ENCODE measurements at regions of chr4 and their contacts with region 1.

Region 1: DNA sequence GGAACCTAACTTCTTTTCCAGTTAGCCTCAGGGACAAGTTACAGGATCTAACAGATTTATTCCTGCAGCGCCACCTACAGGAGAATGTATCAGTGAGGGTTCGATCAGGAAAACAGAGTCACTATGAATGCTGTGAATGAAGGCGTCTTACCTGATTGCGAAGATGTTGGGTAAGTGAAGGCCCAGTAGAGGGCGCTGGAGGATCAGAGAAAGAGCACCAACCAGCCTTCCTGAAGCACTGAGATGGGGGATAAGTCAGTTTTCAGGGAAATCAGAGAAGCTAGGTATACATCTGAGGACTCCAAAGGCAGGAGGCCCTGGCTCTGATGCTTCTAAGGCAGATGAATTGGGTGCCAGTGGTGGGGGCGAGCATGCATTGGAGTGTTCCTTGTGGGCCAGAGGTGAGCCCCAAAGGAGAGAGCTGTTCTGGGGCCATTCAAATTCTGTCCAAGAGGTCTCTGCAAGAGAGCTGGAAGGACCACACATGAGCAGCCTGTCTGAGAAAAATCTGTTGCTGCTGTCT is 169.9 kb upstream of the AADAT start:
- DNase-seq: peak; percentile 82 to 86
- H3K4me3 ChIP-seq: no peak overlapping the region
- H3K4me3 Mint-ChIP-seq: no peak overlapping the region
- H3K27ac Mint-ChIP-seq: no peak overlapping the region
- H3K4me1 ChIP-seq: no peaks in the 10 kb centered on the region
- H3K4me1 Mint-ChIP-seq: no peaks in the 10 kb centered on the region
- H3K27me3 ChIP-seq: no peaks in the 10 kb centered on the region
- H3K27me3 Mint-ChIP-seq: no peaks in the 10 kb centered on the region
- CTCF ChIP-seq: peak; percentile 79 to 86

Region 2: DNA sequence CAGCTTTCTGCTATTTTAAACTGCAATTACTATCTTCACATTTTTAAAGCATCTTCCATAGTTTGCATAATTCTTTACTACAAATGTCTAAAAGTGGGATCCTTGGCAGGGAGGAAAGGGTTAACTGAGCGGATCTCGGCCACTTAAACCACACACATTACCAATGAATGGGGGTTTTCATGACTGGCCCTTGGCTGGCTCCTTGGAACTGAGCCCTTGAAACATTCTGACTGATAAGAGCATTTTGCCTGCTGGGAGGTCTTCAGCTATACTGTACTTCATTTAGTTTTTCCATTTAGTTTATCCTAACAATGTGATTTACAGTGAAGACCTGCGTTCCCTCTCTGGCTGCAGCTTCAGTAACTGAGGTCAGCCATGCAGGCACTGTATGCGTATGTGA is 201.8 kb before region 1 on chr4:
- CTCF ChIA-PET with region 1: no interaction called
- POLR2A ChIA-PET with region 1: no interaction called
- intact Hi-C with region 1: no loop called
- DNase-seq: no peak
- H3K4me3 ChIP-seq: no peak overlapping the region
- H3K4me3 Mint-ChIP-seq: no peak overlapping the region
- H3K27ac Mint-ChIP-seq: no peak overlapping the region
- H3K4me1 ChIP-seq: no peaks in the 10 kb centered on the region
- H3K4me1 Mint-ChIP-seq: no peaks in the 10 kb centered on the region
- H3K27me3 ChIP-seq: no peaks in the 10 kb centered on the region
- H3K27me3 Mint-ChIP-seq: no peaks in the 10 kb centered on the region
- CTCF ChIP-seq: no peak

Region 3: GRCh38 chr4:170138580-170139194 is 121.0 kb before region 1 on chr4:
- CTCF ChIA-PET with region 1: interaction called, 3 read pairs
- POLR2A ChIA-PET with region 1: no interaction called
- intact Hi-C with region 1: loop called (anchors 1 kb)
- DNase-seq: peak; percentile 69 to 74
- H3K4me3 ChIP-seq: no peak overlapping the region
- H3K4me3 Mint-ChIP-seq: no peak overlapping the region
- H3K27ac Mint-ChIP-seq: no peak overlapping the region
- H3K4me1 ChIP-seq: no peaks in the 10 kb centered on the region
- H3K4me1 Mint-ChIP-seq: peaks cover 6% of the 10 kb centered on the region
- H3K27me3 ChIP-seq: no peaks in the 10 kb centered on the region
- H3K27me3 Mint-ChIP-seq: peaks cover 6% of the 10 kb centered on the region
- CTCF ChIP-seq: peak; percentile 68 to 75

Region 4: GRCh38 chr4:170198747-170199146 is 60.9 kb before region 1 on chr4:
- CTCF ChIA-PET with region 1: interaction called, 7 read pairs
- POLR2A ChIA-PET with region 1: no interaction called
- intact Hi-C with region 1: loop called (anchors 1 kb)
- DNase-seq: no peak
- H3K4me3 ChIP-seq: no peak overlapping the region
- H3K4me3 Mint-ChIP-seq: no peak overlapping the region
- H3K27ac Mint-ChIP-seq: no peak overlapping the region
- H3K4me1 ChIP-seq: no peaks in the 10 kb centered on the region
- H3K4me1 Mint-ChIP-seq: no peaks in the 10 kb centered on the region
- H3K27me3 ChIP-seq: no peaks in the 10 kb centered on the region
- H3K27me3 Mint-ChIP-seq: no peaks in the 10 kb centered on the region
- CTCF ChIP-seq: no peak

Region 5: DNA sequence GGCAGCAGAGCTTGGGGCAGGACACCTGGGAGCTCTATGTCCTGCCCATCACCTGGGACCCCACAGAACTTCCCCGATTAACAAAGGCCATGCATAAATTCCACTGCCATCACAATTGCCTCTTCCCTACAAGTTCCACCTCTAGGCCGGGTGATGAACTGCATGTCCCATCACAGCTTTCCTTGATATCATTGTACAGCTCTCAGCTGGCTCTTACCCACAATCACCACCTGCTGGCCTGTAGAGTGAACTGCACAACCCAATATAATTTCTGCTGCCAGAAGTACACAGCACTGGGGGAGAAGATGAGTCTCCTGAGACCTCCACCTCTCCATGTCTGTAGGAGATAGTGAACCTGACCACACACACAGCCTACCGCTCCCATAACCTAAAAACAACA is 115.1 kb after region 1 on chr4:
- CTCF ChIA-PET with region 1: interaction called, 15 read pairs
- POLR2A ChIA-PET with region 1: no interaction called
- intact Hi-C with region 1: loop called (anchors 1 kb)
- DNase-seq: peak in 1 of 2 experiments; percentile 44
- H3K4me3 ChIP-seq: no peak overlapping the region
- H3K4me3 Mint-ChIP-seq: no peak overlapping the region
- H3K27ac Mint-ChIP-seq: no peak overlapping the region
- H3K4me1 ChIP-seq: no peaks in the 10 kb centered on the region
- H3K4me1 Mint-ChIP-seq: no peaks in the 10 kb centered on the region
- H3K27me3 ChIP-seq: no peaks in the 10 kb centered on the region
- H3K27me3 Mint-ChIP-seq: no peaks in the 10 kb centered on the region
- CTCF ChIP-seq: peak; percentile 47 to 58

Region 6: GRCh38 chr4:170940043-170940724 is 680.5 kb after region 1 on chr4:
- CTCF ChIA-PET with region 1: no interaction called
- POLR2A ChIA-PET with region 1: no interaction called
- intact Hi-C with region 1: no loop called
- DNase-seq: no peak
- H3K4me3 ChIP-seq: no peak overlapping the region
- H3K4me3 Mint-ChIP-seq: no peak overlapping the region
- H3K27ac Mint-ChIP-seq: no peak overlapping the region
- H3K4me1 ChIP-seq: no peaks in the 10 kb centered on the region
- H3K4me1 Mint-ChIP-seq: no peaks in the 10 kb centered on the region
- H3K27me3 ChIP-seq: no peaks in the 10 kb centered on the region
- H3K27me3 Mint-ChIP-seq: peaks cover 4% of the 10 kb centered on the region
- CTCF ChIP-seq: no peak

Measured in Caco-2 (cell line).